ENCODE measurements at regions of chr7 and their contacts with region 1.

Region 1: DNA sequence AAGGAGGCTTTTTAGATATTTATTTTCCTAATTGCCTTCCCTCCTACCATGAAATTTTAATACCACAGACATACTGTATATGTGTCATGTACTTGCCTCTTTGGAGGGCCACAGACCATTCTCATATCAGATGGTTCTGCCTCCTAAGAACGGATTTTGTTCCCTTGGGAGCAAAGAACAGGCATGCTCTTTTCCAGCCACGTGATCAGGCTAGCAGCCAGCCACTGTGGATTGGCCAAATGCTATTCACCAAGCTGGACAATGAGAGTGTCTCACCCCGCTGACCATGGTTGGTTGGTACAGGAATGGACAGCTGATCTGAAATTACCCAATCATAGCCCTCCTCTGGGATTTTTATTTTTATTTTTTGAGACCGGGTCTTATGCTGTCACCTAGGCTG is 21.5 kb upstream of the CRHR2 start:
- DNase-seq: no peak

Region 2: DNA sequence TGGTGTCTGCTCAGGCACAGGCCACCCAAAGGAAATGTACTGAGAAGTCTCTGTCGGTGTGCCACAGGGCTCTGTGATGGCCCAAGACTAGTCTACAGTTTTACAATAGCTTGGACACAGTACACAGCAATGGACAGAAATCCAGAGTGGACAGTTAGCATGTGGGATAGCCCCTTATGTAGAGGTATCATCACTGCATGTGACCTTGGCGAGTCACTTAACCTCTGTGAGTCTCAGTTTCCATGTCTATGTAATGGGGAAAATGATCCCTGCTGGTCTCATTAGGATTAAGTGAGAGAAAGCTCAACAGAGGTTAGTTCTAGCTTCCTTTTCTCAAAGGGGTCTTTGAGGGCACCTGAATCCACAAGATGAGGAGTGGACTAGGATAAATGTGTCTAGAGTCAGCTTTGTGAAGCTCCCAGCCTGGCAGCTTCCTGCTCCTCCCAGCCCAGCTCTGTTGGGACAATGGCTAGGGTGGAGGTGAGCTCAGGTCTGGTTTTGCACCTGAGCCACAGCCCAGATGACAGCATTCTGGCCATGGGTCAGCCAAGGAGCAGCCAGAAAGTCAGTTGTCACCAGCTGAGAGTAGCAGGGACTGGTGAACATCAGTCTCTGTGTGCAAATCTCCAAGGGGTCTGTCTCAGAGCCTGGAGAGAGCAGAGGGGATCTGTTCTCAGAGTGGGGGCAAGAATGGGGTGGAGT is 39.4 kb before region 1 on chr7:
- intact Hi-C with region 1: loop called in 1 of 2 experiments (anchors 1 kb)
- DNase-seq: peak; percentile 69

Region 3: GRCh38 chr7:30740424-30741181 is 36.8 kb after region 1 on chr7:
- intact Hi-C with region 1: no loop called
- DNase-seq: peak; percentile 93